Activated T-helper 2 cell treated with anti-CD3 and anti-CD28 coated beads, Interferon-gamma antibody, Interleukin-2, Interleukin-4, amounts not matched to agents 10 μg/mL and 5 μg/mL and 100 μg/mL, durations not matched to agents 14 hours and 24 hours and 36 hours (primary cell): ENCODE measurements at regions of chr6 and their contacts with region 1.

Region 1: GRCh38 chr6:28816909-28817807 is 106.6 kb downstream of the TRIM27 start:
- DNase-seq: no peak
- H3K4me3 Mint-ChIP-seq: no peak overlapping the region
- H3K27ac Mint-ChIP-seq: no peak overlapping the region
- H3K4me1 Mint-ChIP-seq: peaks cover 12% of the 10 kb centered on the region
- H3K27me3 Mint-ChIP-seq: peaks cover 72% of the 10 kb centered on the region

Region 2: DNA sequence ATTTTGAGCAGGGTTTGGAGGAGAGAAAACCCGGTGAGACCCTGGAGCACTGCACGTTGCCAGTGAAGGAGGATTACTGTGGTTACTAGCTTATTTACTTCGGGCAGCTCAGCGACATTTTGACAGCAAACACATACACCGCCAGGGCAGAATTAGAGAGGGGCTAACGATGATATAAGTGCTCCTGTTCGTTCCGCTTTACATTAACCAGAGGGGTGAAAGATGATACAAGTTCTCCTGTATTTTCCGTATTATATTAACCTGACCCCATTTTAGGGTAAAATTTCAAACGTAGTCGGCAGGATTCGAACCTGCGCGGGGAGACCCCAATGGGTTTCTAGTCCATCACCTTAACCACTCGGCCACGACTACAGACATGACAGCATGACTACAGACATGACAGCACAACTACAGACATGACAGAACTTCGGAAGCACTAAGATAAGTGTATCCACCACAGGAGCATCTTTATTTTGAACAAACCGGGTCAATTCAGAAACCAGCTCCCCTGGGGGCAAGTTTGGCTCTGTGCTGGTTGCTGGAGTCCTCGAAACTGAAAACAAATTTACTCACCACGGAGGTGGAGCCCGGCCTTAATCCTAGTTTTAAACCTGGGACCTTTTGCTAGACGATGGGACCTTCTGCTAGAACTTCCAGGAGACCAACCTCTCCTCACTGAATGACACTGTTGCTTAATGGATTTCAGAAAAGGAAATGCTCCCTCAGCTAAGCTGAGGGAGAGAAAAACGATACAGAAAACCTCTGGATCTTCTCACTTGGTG is 1263.8 kb before region 1 on chr6:
- intact Hi-C with region 1: loop called (anchors 10 kb)
- DNase-seq: peak; percentile 24
- H3K4me3 Mint-ChIP-seq: peak overlapping the region; percentile 60
- H3K27ac Mint-ChIP-seq: peak overlapping the region; percentile 38
- H3K4me1 Mint-ChIP-seq: peaks cover 16% of the 10 kb centered on the region
- H3K27me3 Mint-ChIP-seq: peaks cover 68% of the 10 kb centered on the region

Region 3: GRCh38 chr6:28090917-28091586 is 726.1 kb before region 1 on chr6:
- intact Hi-C with region 1: no loop called
- DNase-seq: no peak
- H3K4me3 Mint-ChIP-seq: no peak overlapping the region
- H3K27ac Mint-ChIP-seq: no peak overlapping the region
- H3K4me1 Mint-ChIP-seq: no peaks in the 10 kb centered on the region
- H3K27me3 Mint-ChIP-seq: no peaks in the 10 kb centered on the region

Region 4: GRCh38 chr6:28695715-28696114 is 121.4 kb before region 1 on chr6:
- intact Hi-C with region 1: loop called (anchors 10 kb)
- DNase-seq: no peak
- H3K4me3 Mint-ChIP-seq: no peak overlapping the region
- H3K27ac Mint-ChIP-seq: no peak overlapping the region
- H3K4me1 Mint-ChIP-seq: peaks cover 7% of the 10 kb centered on the region
- H3K27me3 Mint-ChIP-seq: peaks cover 84% of the 10 kb centered on the region

Region 5: DNA sequence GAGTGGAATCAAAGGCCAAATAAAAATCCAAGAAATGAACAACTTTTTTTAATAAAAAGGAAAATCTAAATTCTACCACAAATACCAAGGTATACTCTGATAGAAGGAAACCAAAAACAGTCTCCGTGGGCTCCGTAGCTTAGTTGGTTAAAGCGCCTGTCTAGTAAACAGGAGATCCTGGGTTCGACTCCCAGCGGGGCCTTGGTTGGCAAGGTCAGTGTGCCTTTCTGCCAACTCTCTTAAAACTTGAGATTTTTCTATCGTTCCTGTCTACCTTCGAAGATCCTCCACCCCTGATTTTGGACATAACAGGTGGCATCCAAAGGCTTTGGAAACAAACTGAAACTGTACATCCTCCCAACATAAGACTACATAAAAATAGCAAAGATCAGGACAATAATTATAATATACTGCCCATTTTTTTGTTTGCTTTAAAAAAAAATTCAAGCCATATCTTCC is 91.2 kb before region 1 on chr6:
- intact Hi-C with region 1: no loop called
- DNase-seq: no peak
- H3K4me3 Mint-ChIP-seq: no peak overlapping the region
- H3K27ac Mint-ChIP-seq: no peak overlapping the region
- H3K4me1 Mint-ChIP-seq: peaks cover 19% of the 10 kb centered on the region
- H3K27me3 Mint-ChIP-seq: peaks cover 69% of the 10 kb centered on the region

Region 6: DNA sequence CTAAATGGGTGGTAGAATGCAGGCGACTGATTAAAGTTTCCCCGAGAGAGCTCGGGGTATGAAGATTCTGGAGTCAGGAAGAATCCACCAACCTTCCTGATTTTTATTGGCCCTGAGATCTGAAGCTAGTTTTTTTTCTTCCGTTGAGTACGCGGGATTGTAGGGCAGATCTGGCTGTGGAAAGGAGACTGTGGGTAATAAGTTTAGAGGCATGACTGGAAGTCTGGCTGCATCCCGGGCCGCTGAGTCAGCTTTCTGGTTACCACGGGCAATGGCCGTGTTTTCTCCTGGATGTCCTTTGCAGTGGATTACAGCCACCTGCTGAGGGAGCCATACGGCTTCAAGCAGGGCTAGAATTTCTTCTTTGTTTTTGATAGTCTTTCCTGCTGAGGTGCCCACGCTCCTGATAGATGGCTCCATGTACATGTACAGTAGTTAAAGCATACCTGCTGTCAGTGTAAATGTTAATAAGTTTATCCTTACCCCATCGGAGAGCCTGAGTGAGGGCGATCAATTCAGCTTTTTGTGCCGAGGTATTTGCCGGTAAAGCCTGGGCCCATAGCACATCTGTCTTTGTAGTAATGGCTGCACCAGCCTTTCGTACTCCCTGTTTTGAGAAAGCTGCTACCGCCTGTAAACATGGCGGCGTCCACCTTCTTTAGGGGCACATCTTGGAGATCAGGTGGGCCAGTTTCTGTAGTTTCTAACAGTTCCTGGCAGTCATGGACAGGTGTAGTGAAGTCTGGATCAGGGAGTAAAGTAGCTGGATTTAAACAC is 47.3 kb before region 1 on chr6:
- intact Hi-C with region 1: loop called (anchors 2 kb)
- DNase-seq: no peak
- H3K4me3 Mint-ChIP-seq: no peak overlapping the region
- H3K27ac Mint-ChIP-seq: no peak overlapping the region
- H3K4me1 Mint-ChIP-seq: peaks cover 5% of the 10 kb centered on the region
- H3K27me3 Mint-ChIP-seq: peaks cover 92% of the 10 kb centered on the region